BJ (cell line): ENCODE measurements at regions of chr6 and their contacts with region 1.

Region 1: GRCh38 chr6:150881911-150882481 is 16.5 kb downstream of the MTHFD1L start:
- DNase-seq: peak; percentile 98
- H3K4me3 ChIP-seq: no peak overlapping the region
- H3K27me3 ChIP-seq: no peaks in the 10 kb centered on the region
- CTCF ChIP-seq: no peak

Region 2: DNA sequence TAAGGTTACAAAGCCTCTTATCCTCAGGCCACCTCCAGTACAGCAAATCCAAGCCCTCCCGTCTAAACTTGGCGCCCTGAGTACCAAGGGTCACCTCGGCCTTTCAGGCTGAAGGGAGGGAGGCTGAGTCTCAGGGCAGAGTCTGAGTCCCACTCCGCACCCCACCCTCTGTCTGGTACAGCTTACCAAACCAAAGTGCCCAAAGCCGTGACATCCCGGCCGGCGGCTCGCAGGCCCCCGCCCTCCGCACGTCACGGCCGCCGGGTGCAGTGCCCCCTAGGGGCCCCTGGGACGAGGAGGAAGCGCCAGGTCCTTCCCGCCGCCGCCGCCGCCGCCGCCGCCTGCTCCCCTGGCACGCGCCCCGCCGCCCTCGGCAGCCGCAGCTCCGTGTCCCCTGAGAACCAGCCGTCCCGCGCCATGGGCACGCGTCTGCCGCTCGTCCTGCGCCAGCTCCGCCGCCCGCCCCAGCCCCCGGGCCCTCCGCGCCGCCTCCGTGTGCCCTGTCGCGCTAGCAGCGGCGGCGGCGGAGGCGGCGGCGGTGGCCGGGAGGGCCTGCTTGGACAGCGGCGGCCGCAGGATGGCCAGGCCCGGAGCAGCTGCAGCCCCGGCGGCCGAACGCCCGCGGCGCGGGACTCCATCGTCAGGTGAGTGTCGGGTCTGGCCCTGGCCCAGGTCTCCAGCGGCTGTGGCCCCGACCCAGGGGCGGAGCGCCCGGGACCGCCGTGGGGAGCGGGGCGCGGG is 16.4 kb before region 1 on chr6 and contains the start of gene MTHFD1L:
- CTCF ChIA-PET with region 1: interaction called, 5 read pairs
- POLR2A ChIA-PET with region 1: interaction called, 11 read pairs
- DNase-seq: peak; percentile 45
- H3K4me3 ChIP-seq: peak within 1 kb of the TSS; percentile 83
- H3K27me3 ChIP-seq: no peaks in the 10 kb centered on the region
- CTCF ChIP-seq: peak; percentile 50
- polyA plus RNA-seq, gene MTHFD1L: 58.9 and 70.7 TPM in 2 replicates